B cell (primary cell): ENCODE measurements at regions of chr9 and their contacts with region 1.

Region 1: GRCh38 chr9:121201738-121202533 is at the start of gene RAB14:
- DNase-seq: peak; percentile 100
- ATAC-seq: peak; percentile 89
- H3K4me3 ChIP-seq: peak within 1 kb of the TSS; percentile 80 to 93 (median 82)
- H3K4me3 Mint-ChIP-seq: peak within 1 kb of the TSS; percentile 97
- H3K27ac ChIP-seq: peak within 1 kb of the TSS; percentile 79 to 91
- H3K27ac Mint-ChIP-seq: peak within 1 kb of the TSS; percentile 98
- H3K4me1 ChIP-seq: peaks cover 36 to 47% of the 10 kb centered on the region in 2 donors
- H3K4me1 Mint-ChIP-seq: peaks cover 55% of the 10 kb centered on the region
- H3K27me3 ChIP-seq: no peaks in the 10 kb centered on the region
- H3K27me3 Mint-ChIP-seq: no peaks in the 10 kb centered on the region
- CTCF ChIP-seq: peak; percentile 51
- total RNA-seq, gene RAB14: 50.9 and 52.6 TPM in 2 replicates

Region 2: GRCh38 chr9:120928483-120929228 is 273.3 kb before region 1 on chr9:
- CTCF ChIA-PET with region 1: interaction called, 3 read pairs
- POLR2A ChIA-PET with region 1: no interaction called
- intact Hi-C with region 1: loop called (anchors 5 kb)
- DNase-seq: peak; percentile 83
- ATAC-seq: peak; percentile 60
- H3K4me3 ChIP-seq: peak overlapping the region in 4 of 5 experiments; percentile 56 to 82 (median 72)
- H3K4me3 Mint-ChIP-seq: peak overlapping the region; percentile 81
- H3K27ac ChIP-seq: peak overlapping the region; percentile 90 to 99
- H3K27ac Mint-ChIP-seq: peak overlapping the region; percentile 89
- H3K4me1 ChIP-seq: peaks cover 75 to 89% of the 10 kb centered on the region in 2 donors
- H3K4me1 Mint-ChIP-seq: peaks cover 86% of the 10 kb centered on the region
- H3K27me3 ChIP-seq: no peaks in the 10 kb centered on the region
- H3K27me3 Mint-ChIP-seq: no peaks in the 10 kb centered on the region
- CTCF ChIP-seq: peak; percentile 29

Region 3: GRCh38 chr9:121074635-121075385 is 127.1 kb before region 1 on chr9 and contains the start of gene CNTRL:
- CTCF ChIA-PET with region 1: no interaction called
- POLR2A ChIA-PET with region 1: interaction called, 3 read pairs
- intact Hi-C with region 1: loop called (anchors 2 kb)
- DNase-seq: peak; percentile 85
- ATAC-seq: peak; percentile 72
- H3K4me3 ChIP-seq: peak within 1 kb of the TSS; percentile 80 to 99 (median 92)
- H3K4me3 Mint-ChIP-seq: peak within 1 kb of the TSS; percentile 100
- H3K27ac ChIP-seq: peak within 1 kb of the TSS; percentile 86 to 99
- H3K27ac Mint-ChIP-seq: peak within 1 kb of the TSS; percentile 94
- H3K4me1 ChIP-seq: peaks cover 42 to 49% of the 10 kb centered on the region in 2 donors
- H3K4me1 Mint-ChIP-seq: peaks cover 64% of the 10 kb centered on the region
- H3K27me3 ChIP-seq: no peaks in the 10 kb centered on the region
- H3K27me3 Mint-ChIP-seq: no peaks in the 10 kb centered on the region
- CTCF ChIP-seq: no peak
- total RNA-seq, gene CNTRL: 146 and 150 TPM in 2 replicates

Region 4: DNA sequence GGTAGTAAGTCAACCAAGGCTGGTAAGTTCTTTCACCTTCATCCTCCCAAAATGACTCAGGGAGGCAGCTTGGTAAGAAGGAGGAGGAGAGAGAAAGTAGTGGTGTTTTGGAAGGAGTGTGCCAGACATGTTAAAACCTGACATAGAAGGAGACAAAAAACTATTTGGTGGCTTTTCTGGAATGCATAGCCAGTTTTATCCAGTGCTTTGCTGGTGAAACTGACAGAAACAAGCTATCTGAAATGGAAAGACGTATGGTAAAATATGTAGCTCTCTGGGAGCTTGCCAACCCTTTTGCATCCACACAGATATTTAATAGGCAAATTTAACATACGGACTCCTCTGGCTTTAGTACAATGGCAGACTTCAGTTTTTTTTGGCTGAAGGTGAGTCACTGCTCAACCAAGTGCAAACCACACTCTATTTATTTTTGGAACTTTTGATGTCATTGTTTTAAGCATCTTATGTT is 45.6 kb before region 1 on chr9:
- CTCF ChIA-PET with region 1: interaction called, 3 read pairs
- POLR2A ChIA-PET with region 1: interaction called, 5 read pairs
- intact Hi-C with region 1: loop called (anchors 1 kb)
- DNase-seq: peak; percentile 74
- ATAC-seq: peak; percentile 89
- H3K4me3 ChIP-seq: peak overlapping the region in 1 of 5 experiments; percentile 28
- H3K4me3 Mint-ChIP-seq: peak overlapping the region; percentile 76
- H3K27ac ChIP-seq: peak overlapping the region; percentile 61 to 88
- H3K27ac Mint-ChIP-seq: peak overlapping the region; percentile 95
- H3K4me1 ChIP-seq: peaks cover 47 to 50% of the 10 kb centered on the region in 2 donors
- H3K4me1 Mint-ChIP-seq: peaks cover 64% of the 10 kb centered on the region
- H3K27me3 ChIP-seq: no peaks in the 10 kb centered on the region
- H3K27me3 Mint-ChIP-seq: no peaks in the 10 kb centered on the region
- CTCF ChIP-seq: no peak

Region 5: GRCh38 chr9:121213136-121213806 is 11.3 kb after region 1 on chr9:
- CTCF ChIA-PET with region 1: interaction called, 61 read pairs
- POLR2A ChIA-PET with region 1: interaction called, 4 read pairs
- intact Hi-C with region 1: no loop called
- DNase-seq: peak; percentile 75
- ATAC-seq: peak; percentile 74
- H3K4me3 ChIP-seq: no peak overlapping the region
- H3K4me3 Mint-ChIP-seq: no peak overlapping the region
- H3K27ac ChIP-seq: no peak overlapping the region
- H3K27ac Mint-ChIP-seq: peak overlapping the region; percentile 42
- H3K4me1 ChIP-seq: peaks cover 5 to 14% of the 10 kb centered on the region in 2 donors
- H3K4me1 Mint-ChIP-seq: peaks cover 20% of the 10 kb centered on the region
- H3K27me3 ChIP-seq: no peaks in the 10 kb centered on the region
- H3K27me3 Mint-ChIP-seq: no peaks in the 10 kb centered on the region
- CTCF ChIP-seq: peak; percentile 94

Region 6: GRCh38 chr9:121369595-121370265 is 167.8 kb after region 1 on chr9 and contains the start of gene STOM:
- CTCF ChIA-PET with region 1: no interaction called
- POLR2A ChIA-PET with region 1: no interaction called
- intact Hi-C with region 1: loop called (anchors 1 kb)
- DNase-seq: no peak
- ATAC-seq: peak; percentile 56
- H3K4me3 ChIP-seq: peak within 1 kb of the TSS; percentile 58 to 93 (median 71)
- H3K4me3 Mint-ChIP-seq: peak within 1 kb of the TSS; percentile 91
- H3K27ac ChIP-seq: peak within 1 kb of the TSS; percentile 68 to 75
- H3K27ac Mint-ChIP-seq: peak within 1 kb of the TSS; percentile 91
- H3K4me1 ChIP-seq: peaks cover 19 to 20% of the 10 kb centered on the region in 2 donors
- H3K4me1 Mint-ChIP-seq: peaks cover 29% of the 10 kb centered on the region
- H3K27me3 ChIP-seq: no peaks in the 10 kb centered on the region
- H3K27me3 Mint-ChIP-seq: no peaks in the 10 kb centered on the region
- CTCF ChIP-seq: no peak
- total RNA-seq, gene STOM: 6.1 and 6.3 TPM in 2 replicates